Aorta (tissue), 5 donors: ENCODE measurements at regions of chr11 and their contacts with region 1.

Region 1: DNA sequence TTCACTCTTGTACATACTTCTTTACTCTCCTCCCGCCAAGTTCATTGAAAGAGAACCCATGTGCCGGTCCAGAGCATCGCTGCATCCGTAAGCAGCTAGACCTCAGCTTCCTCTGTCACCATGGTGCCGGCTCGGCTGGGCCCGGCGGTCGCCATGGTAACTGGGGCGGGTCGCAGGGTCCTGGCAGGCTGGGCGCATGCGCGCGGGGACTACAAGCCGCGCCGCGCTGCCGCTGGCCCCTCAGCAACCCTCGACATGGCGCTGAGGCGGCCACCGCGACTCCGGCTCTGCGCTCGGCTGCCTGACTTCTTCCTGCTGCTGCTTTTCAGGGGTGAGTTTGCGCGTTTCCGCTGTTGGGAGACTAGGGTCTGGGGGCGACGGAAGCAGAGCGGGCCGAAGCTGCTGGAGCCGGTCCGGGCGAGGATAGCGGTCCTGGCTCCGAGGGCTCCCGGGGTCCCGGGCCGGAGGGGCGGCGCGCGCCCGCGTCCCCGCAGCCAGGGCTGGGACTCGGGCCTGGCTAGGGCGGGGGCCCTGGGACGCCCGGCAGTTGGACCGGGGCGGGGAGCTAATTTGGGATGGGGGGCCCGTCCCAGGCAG is at the start of gene JAM3:
- DNase-seq: peak; percentile 97 to 99
- ATAC-seq: peak; percentile 97
- H3K4me3 ChIP-seq: peak within 1 kb of the TSS; percentile 65 to 73
- H3K27ac ChIP-seq: peak within 1 kb of the TSS; percentile 59 to 64
- H3K4me1 ChIP-seq: peaks cover 0 to 2% of the 10 kb centered on the region in 2 donors
- H3K27me3 ChIP-seq: no peaks in the 10 kb centered on the region
- total RNA-seq, gene JAM3: 94.9 to 102 TPM

Region 2: GRCh38 chr11:134124660-134125451 is 55.9 kb after region 1 on chr11:
- intact Hi-C with region 1: loop called (anchors 2 kb)
- DNase-seq: peak; percentile 57 to 85
- ATAC-seq: peak; percentile 69
- H3K4me3 ChIP-seq: peak overlapping the region; percentile 23 to 31
- H3K27ac ChIP-seq: peak overlapping the region; percentile 2 to 85
- H3K4me1 ChIP-seq: peaks cover 3 to 8% of the 10 kb centered on the region in 2 donors
- H3K27me3 ChIP-seq: no peaks in the 10 kb centered on the region

Region 3: DNA sequence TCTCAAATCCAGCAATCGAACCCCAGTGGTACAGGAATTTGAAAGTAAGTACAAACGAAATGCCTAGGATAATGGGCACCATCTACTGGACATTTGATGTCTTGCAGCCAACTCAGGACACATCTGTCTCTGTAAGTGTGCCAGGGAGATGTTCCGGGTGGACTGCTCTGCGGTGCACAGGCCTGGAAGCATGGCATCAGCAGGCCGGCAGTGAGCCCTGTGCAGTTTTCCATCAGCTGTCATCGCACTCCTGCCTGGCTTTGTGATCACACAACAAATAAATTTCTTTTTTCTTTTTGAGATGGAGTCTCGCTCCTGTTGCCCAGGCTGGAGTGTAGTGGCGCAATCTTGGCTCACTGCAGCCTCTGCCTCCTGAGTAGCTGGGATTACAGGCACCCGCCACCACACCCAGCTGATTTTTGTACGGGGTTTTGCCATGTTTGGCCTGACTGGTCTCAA is 71.0 kb after region 1 on chr11:
- intact Hi-C with region 1: loop called (anchors 1 to 5 kb)
- DNase-seq: no peak
- ATAC-seq: peak; percentile 93
- H3K4me3 ChIP-seq: no peak overlapping the region
- H3K27ac ChIP-seq: peak overlapping the region; percentile 55 to 84
- H3K4me1 ChIP-seq: no peaks in the 10 kb centered on the region
- H3K27me3 ChIP-seq: no peaks in the 10 kb centered on the region